ENCODE measurements at regions of chr6 and their contacts with region 1.

Region 1: DNA sequence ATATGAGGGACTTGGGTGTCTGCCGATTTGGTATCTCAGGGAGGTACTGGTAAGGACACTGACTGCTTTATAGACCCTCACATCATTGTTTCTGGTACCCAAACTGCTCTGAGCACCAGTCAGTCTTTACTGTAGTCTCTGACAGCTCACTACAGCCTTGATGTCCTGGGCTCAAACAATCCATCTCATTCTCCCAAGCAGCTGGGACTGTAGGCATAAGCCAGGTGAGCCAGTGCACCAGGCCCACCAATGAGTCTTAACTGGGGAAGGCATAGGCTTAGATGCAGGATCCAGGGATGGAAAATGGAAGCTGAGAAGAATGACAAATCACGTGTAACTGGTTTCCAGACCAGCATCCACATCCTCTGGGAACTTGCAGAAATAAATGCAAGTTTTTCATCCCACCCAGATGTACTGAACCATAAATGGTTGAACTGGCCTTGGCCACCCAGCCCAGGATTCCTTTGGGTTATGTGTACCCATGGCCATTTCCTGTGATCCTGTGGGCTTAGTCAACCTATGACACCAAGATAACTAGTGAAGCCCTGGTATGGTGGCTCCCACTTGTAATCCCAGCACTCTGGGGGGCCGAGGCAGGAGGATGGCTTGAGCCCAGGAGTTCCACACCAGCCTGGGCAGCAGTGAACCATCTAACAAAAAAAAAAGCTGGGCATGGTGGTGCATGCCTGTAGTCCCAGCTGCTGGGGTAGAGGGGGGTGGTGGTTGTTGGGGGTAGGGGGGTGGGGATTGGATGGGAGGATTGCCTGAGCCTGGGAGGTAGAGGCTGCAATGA is 5.8 kb downstream of the TUBB start:
- DNase-seq: no peak
- CTCF ChIP-seq: no peak

Region 2: GRCh38 chr6:30483677-30484279 is 242.1 kb before region 1 on chr6:
- in situ Hi-C with region 1: no loop called
- DNase-seq: peak; percentile 64
- CTCF ChIP-seq: peak; percentile 33

Region 3: DNA sequence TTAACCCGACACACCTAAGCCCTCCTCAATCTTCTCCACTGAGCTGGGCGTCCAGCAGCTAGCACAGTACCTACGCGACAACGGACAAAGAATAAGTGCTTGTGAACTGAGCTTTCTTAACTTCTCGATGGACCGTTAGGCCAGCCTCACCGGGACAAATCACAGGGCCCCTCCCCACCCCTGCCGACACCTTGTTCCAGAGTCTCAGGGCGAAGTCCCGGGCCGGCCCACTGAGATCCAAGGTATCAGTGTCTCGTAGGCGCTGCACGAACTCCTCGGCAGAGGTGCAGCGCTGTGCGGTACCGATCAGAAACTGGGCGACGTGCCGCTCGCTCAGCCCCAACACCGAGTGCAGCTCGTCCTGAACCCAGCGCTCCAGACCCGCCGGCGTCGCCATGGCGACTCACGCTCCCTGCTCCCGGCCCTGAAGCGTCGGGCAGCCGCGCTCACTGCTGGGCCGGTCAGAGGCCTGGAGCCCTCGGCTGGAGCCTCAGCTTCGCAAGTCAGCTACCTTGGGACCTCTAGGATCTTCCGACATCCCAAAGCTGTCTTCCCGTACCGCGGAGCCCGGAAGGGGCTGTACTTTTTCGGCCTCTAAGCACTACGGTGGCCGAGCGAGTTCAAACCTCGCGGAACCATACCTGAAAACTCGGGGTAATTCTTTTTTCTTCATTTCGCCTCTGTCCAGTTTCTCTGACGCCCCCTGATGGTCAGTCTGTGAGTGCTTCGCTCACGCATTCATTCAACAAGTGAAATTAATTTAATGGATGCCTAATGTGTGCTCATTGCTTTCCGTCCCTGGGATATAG is 53.3 kb before region 1 on chr6 and contains the start of gene DHX16:
- in situ Hi-C with region 1: loop called (anchors 5 kb)
- DNase-seq: peak; percentile 95
- CTCF ChIP-seq: peak; percentile 90

Region 4: GRCh38 chr6:31042806-31043205 is 316.9 kb after region 1 on chr6:
- in situ Hi-C with region 1: no loop called
- DNase-seq: peak; percentile 42
- CTCF ChIP-seq: no peak

Measured in GM13976 (cell line).